ENCODE measurements at regions of chr5 and their contacts with region 1.

Region 1: GRCh38 chr5:80181618-80182211 is 74.1 kb downstream of the SERINC5 start:
- DNase-seq: peak in 9 of 10 donors; percentile 32 to 87 (median 68)
- ATAC-seq: peak; percentile 62 to 68
- H3K4me3 Mint-ChIP-seq: peak overlapping the region; percentile 54 to 90 (median 64)
- H3K27ac Mint-ChIP-seq: peak overlapping the region; percentile 79 to 99 (median 97)
- H3K4me1 Mint-ChIP-seq: peaks cover 53 to 89% (median 89%) of the 10 kb centered on the region in 4 donors
- H3K27me3 Mint-ChIP-seq: no peaks in the 10 kb centered on the region

Region 2: GRCh38 chr5:80153586-80154126 is 28.1 kb before region 1 on chr5:
- POLR2A ChIA-PET with region 1: interaction called, 29 read pairs
- DNase-seq: peak in 7 of 10 donors; percentile 23 to 77 (median 73)
- ATAC-seq: peak; percentile 65 to 71
- H3K4me3 Mint-ChIP-seq: peak overlapping the region in 9 of 10 donors; percentile 28 to 87 (median 79)
- H3K27ac Mint-ChIP-seq: peak overlapping the region; percentile 94 to 100 (median 98)
- H3K4me1 Mint-ChIP-seq: peaks cover 24 to 95% (median 71%) of the 10 kb centered on the region in 4 donors
- H3K27me3 Mint-ChIP-seq: no peaks in the 10 kb centered on the region

Region 3: DNA sequence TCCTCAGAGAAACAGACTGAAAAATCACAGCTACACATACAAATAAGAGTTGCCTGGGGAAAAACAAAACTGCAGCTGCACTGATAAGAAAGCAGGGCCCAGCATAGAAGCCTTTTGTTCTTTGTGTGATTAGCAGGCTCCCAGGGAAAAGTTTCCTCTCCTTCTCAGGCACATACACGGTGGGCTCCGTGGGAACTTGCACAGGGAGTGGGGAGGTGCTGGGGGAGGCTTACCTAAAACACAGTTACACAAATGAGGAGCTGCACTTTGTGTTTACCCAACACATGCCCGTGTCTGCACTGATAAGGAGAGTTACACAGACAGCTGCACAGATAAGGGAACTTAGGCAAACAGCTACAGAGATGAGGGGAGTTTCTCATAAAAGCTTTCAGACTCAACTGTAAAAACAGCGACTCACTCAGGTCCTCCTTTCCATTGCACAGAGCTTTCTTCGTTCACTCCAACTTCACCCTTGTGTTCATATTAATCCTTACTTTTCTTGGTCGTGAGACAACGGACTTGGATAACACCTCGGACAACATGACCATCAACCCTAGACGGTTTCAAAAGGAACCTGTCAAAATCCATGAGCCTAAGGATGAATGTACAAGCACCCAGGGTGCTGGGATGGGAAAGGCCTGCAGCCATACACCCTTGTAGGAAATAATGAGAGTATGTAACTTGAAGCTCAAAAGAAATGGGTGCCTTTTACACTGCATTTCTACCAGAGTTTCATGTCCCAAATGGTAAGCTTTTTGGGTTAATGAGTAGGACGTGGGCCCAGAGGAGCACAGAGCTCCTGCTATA is 23.3 kb after region 1 on chr5:
- POLR2A ChIA-PET with region 1: interaction called, 187 read pairs
- DNase-seq: peak in 2 of 10 donors; percentile 48 to 53
- ATAC-seq: peak; percentile 77 to 90
- H3K4me3 Mint-ChIP-seq: peak overlapping the region; percentile 49 to 82 (median 58)
- H3K27ac Mint-ChIP-seq: peak overlapping the region; percentile 84 to 96 (median 92)
- H3K4me1 Mint-ChIP-seq: peaks cover 43 to 92% (median 88%) of the 10 kb centered on the region in 4 donors
- H3K27me3 Mint-ChIP-seq: no peaks in the 10 kb centered on the region

Region 4: DNA sequence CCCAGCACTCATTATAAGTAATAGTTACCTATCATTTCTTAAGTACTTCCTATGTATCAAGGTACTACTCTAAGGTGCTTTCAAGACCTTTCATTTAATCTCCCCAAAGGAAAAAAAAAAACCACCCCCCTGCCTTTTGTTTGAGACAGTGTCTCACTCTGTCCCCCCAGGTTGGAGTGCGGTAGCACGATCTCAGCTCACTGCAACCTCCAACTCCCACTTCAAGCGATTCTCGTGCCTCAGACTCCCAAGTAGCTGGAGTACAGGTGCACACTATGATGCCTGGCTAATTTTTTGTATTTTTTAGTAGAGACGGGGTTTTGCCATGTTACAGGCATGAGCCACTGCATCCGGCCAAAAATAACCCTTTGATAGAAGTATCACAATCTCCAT is 44.2 kb after region 1 on chr5:
- POLR2A ChIA-PET with region 1: no interaction called
- DNase-seq: peak in 4 of 10 donors; percentile 33 to 52 (median 42)
- ATAC-seq: peak; percentile 72 to 80
- H3K4me3 Mint-ChIP-seq: peak overlapping the region; percentile 40 to 84 (median 78)
- H3K27ac Mint-ChIP-seq: peak overlapping the region; percentile 83 to 95 (median 89)
- H3K4me1 Mint-ChIP-seq: peaks cover 32 to 78% (median 69%) of the 10 kb centered on the region in 4 donors
- H3K27me3 Mint-ChIP-seq: no peaks in the 10 kb centered on the region

Region 5: DNA sequence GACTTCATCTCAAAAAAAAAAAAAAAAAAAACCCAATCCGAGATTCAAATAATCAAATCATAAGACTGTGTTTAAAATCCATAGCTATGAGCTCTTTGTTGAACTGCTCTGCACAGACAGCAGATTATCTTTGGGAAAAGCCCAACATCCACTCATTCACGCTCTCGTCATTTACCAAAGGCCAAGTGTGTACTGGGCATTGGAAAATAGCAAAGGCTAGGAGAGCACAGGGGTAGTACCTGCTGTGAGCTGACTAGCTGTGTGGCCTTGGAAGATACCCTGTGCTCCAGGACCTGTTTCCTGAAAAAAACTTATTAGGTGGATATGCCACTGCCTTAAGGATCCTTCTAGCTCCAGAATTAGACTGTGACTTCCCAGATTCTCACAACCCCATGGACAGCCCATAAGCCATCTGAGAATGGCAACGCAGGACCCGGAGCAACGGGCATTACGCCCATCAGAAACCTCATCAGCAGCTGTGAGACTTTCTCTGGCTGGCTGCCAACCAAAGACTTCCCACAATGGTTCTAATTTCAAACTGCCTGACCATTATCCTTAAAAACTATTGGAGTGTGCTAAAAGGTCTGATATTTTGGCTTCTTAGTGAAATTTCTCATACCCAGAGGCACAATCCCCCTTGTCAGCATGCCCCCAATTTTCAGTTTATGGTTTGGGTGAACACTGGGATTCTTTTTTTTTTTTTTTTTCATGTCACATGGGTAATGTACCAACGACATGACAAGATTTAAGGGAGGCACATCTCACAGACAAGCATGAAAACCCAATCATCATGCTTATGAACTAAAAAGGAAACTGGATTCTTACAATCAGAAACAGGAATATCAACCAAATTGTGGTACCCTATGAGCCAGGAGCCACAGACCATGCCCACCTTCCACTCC is 57.3 kb after region 1 on chr5:
- POLR2A ChIA-PET with region 1: interaction called, 10 read pairs
- DNase-seq: peak in 1 of 10 donors; percentile 26
- ATAC-seq: peak; percentile 9 to 30
- H3K4me3 Mint-ChIP-seq: peak overlapping the region; percentile 23 to 85 (median 64)
- H3K27ac Mint-ChIP-seq: peak overlapping the region; percentile 68 to 94 (median 86)
- H3K4me1 Mint-ChIP-seq: peaks cover 39 to 82% (median 75%) of the 10 kb centered on the region in 4 donors
- H3K27me3 Mint-ChIP-seq: no peaks in the 10 kb centered on the region